IMR-90 (cell line): ENCODE measurements at regions of chr5 and their contacts with region 1.

Region 1: GRCh38 chr5:173972925-173973615 is 15.9 kb upstream of the C5orf47 start:
- DNase-seq: peak; percentile 83
- ATAC-seq: peak; percentile 80
- H3K4me3 ChIP-seq: peak overlapping the region; percentile 36
- H3K27ac ChIP-seq: no peak overlapping the region
- H3K4me1 ChIP-seq: peaks cover 13% of the 10 kb centered on the region
- H3K27me3 ChIP-seq: no peaks in the 10 kb centered on the region; the same call in 1 of the 2 replicates
- CTCF ChIP-seq: peak; percentile 89
- POLR2A ChIP-seq: no peak
- RAD21 ChIP-seq: peak; percentile 95

Region 2: GRCh38 chr5:173163219-173163618 is 809.9 kb before region 1 on chr5:
- CTCF ChIA-PET with region 1: no interaction called
- POLR2A ChIA-PET with region 1: no interaction called
- dilution Hi-C with region 1: no loop called
- in situ Hi-C with region 1: no loop called
- intact Hi-C with region 1: loop called (anchors 2 kb)
- DNase-seq: peak; percentile 55
- ATAC-seq: no peak
- H3K4me3 ChIP-seq: no peak overlapping the region
- H3K27ac ChIP-seq: no peak overlapping the region
- H3K4me1 ChIP-seq: peaks cover 2% of the 10 kb centered on the region; the same call in 1 of the 2 replicates
- H3K27me3 ChIP-seq: no peaks in the 10 kb centered on the region
- CTCF ChIP-seq: no peak
- POLR2A ChIP-seq: no peak
- RAD21 ChIP-seq: no peak

Region 3: DNA sequence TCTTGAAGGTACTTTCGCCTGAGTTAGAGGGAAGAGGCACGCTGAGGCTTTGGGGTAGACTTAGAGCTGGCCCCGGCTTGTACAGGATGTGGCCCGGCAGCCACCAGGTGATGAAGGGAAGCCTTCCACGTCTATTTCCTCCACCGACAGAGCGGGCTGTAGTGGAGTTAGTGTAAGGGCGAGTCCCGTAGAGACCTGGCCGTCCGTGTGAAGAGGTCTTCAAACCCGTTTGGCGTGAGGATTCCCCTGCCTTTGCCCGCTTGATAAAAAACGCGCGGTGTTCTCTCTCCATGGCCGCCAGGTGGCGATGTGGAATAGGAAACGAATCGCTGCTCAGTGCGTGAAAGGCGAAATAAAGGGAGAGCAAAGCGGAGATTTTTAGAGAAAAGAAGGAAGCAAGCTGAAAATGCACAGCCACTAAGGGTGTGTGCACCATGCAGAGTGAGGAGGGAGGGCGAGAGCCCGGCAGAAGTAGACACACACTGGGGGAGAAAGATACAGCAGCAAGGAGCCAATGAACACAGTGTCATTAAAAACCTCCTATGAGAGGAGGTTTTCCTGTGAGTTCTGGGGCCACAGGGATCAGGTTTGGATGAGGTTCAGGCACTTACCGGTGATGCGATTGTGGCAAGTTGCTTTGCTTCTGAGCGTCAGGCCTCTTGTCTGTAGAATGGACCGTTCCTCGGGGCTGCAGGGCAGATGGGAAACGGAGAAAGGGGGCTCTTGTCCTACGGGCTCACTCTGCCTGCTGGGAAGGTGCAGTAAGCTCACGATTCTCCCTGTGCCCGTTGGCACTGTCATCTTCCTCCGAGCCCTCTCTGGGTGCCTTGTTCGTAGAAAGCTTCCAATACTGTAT is 679.0 kb before region 1 on chr5:
- CTCF ChIA-PET with region 1: no interaction called
- POLR2A ChIA-PET with region 1: no interaction called
- dilution Hi-C with region 1: no loop called
- in situ Hi-C with region 1: loop called (anchors 10 kb)
- intact Hi-C with region 1: loop called (anchors 2 kb)
- DNase-seq: peak; percentile 80
- ATAC-seq: peak; percentile 84
- H3K4me3 ChIP-seq: no peak overlapping the region
- H3K27ac ChIP-seq: peak overlapping the region; percentile 29
- H3K4me1 ChIP-seq: peaks cover 17% of the 10 kb centered on the region
- H3K27me3 ChIP-seq: no peaks in the 10 kb centered on the region; the same call in 1 of the 2 replicates
- CTCF ChIP-seq: peak; percentile 96
- POLR2A ChIP-seq: peak; percentile 55; the same call in 1 of the 2 replicates
- RAD21 ChIP-seq: peak; percentile 96

Region 4: GRCh38 chr5:173714551-173715428 is 258.3 kb before region 1 on chr5:
- CTCF ChIA-PET with region 1: no interaction called
- POLR2A ChIA-PET with region 1: no interaction called
- dilution Hi-C with region 1: no loop called
- in situ Hi-C with region 1: no loop called
- intact Hi-C with region 1: loop called (anchors 10 kb)
- DNase-seq: peak; percentile 93
- ATAC-seq: peak; percentile 91
- H3K4me3 ChIP-seq: no peak overlapping the region
- H3K27ac ChIP-seq: peak overlapping the region; percentile 31; the same call in 1 of the 2 replicates
- H3K4me1 ChIP-seq: peaks cover 11% of the 10 kb centered on the region
- H3K27me3 ChIP-seq: no peaks in the 10 kb centered on the region
- CTCF ChIP-seq: no peak
- POLR2A ChIP-seq: no peak
- RAD21 ChIP-seq: no peak

Region 5: GRCh38 chr5:173781814-173782670 is 191.0 kb before region 1 on chr5:
- CTCF ChIA-PET with region 1: no interaction called
- POLR2A ChIA-PET with region 1: no interaction called
- dilution Hi-C with region 1: no loop called
- in situ Hi-C with region 1: no loop called
- intact Hi-C with region 1: loop called (anchors 10 kb)
- DNase-seq: peak; percentile 94
- ATAC-seq: peak; percentile 81
- H3K4me3 ChIP-seq: no peak overlapping the region
- H3K27ac ChIP-seq: peak overlapping the region; percentile 88
- H3K4me1 ChIP-seq: peaks cover 16% of the 10 kb centered on the region
- H3K27me3 ChIP-seq: no peaks in the 10 kb centered on the region
- CTCF ChIP-seq: no peak
- POLR2A ChIP-seq: 0 out of 2 replicates have a peak, but pooled peaks have one; percentile 19
- RAD21 ChIP-seq: no peak

Region 6: GRCh38 chr5:173887610-173888472 is 85.2 kb before region 1 on chr5 and contains the start of gene CPEB4:
- CTCF ChIA-PET with region 1: interaction called, 5 read pairs
- POLR2A ChIA-PET with region 1: no interaction called
- dilution Hi-C with region 1: no loop called
- in situ Hi-C with region 1: no loop called
- intact Hi-C with region 1: loop called (anchors 2 kb)
- DNase-seq: peak; percentile 99
- ATAC-seq: peak; percentile 97
- H3K4me3 ChIP-seq: peak within 1 kb of the TSS; percentile 59
- H3K27ac ChIP-seq: peak within 1 kb of the TSS; percentile 96
- H3K4me1 ChIP-seq: no peaks in the 10 kb centered on the region; the same call in 1 of the 2 replicates
- H3K27me3 ChIP-seq: no peaks in the 10 kb centered on the region
- CTCF ChIP-seq: no peak
- POLR2A ChIP-seq: peak; percentile 98
- RAD21 ChIP-seq: peak; percentile 1; the same call in 1 of the 2 replicates
- total RNA-seq, gene CPEB4: 22.6 and 24.2 TPM in 2 replicates

Region 7: GRCh38 chr5:174311531-174312269 is 338.6 kb after region 1 on chr5:
- CTCF ChIA-PET with region 1: no interaction called
- POLR2A ChIA-PET with region 1: no interaction called
- dilution Hi-C with region 1: no loop called
- in situ Hi-C with region 1: loop called (anchors 10 kb)
- intact Hi-C with region 1: loop called (anchors 1 kb)
- DNase-seq: peak; percentile 34
- ATAC-seq: peak; percentile 97
- H3K4me3 ChIP-seq: peak overlapping the region; percentile 40
- H3K27ac ChIP-seq: no peak overlapping the region
- H3K4me1 ChIP-seq: peaks cover 2% of the 10 kb centered on the region; the same call in 1 of the 2 replicates
- H3K27me3 ChIP-seq: peaks cover 10% of the 10 kb centered on the region; the same call in 1 of the 2 replicates
- CTCF ChIP-seq: peak; percentile 73
- POLR2A ChIP-seq: no peak
- RAD21 ChIP-seq: peak; percentile 53